Naive thymus-derived CD4-positive, alpha-beta T cell (primary cell): ENCODE measurements at regions of chr2 and their contacts with region 1.

Region 1: GRCh38 chr2:205766779-205767359 is 84.6 kb downstream of the NRP2 start:
- DNase-seq: peak in 8 of 9 donors; percentile 7 to 49 (median 40)
- ATAC-seq: peak; percentile 49
- H3K4me3 ChIP-seq: no peak overlapping the region
- H3K4me3 Mint-ChIP-seq: peak overlapping the region in 1 of 10 donors; percentile 25
- H3K27ac ChIP-seq: no peak overlapping the region
- H3K27ac Mint-ChIP-seq: no peak overlapping the region
- H3K4me1 ChIP-seq: no peaks in the 10 kb centered on the region
- H3K4me1 Mint-ChIP-seq: peaks cover 0 to 12% (median 8%) of the 10 kb centered on the region in 7 donors
- H3K27me3 ChIP-seq: no peaks in the 10 kb centered on the region
- H3K27me3 Mint-ChIP-seq: peaks cover 27 to 54% (median 35%) of the 10 kb centered on the region in 5 donors

Region 2: GRCh38 chr2:205175831-205176230 is 591.0 kb before region 1 on chr2:
- CTCF ChIA-PET with region 1: no interaction called
- POLR2A ChIA-PET with region 1: no interaction called
- intact Hi-C with region 1: no loop called
- DNase-seq: no peak
- ATAC-seq: no peak
- H3K4me3 ChIP-seq: no peak overlapping the region
- H3K4me3 Mint-ChIP-seq: no peak overlapping the region
- H3K27ac ChIP-seq: no peak overlapping the region
- H3K27ac Mint-ChIP-seq: no peak overlapping the region
- H3K4me1 ChIP-seq: no peaks in the 10 kb centered on the region
- H3K4me1 Mint-ChIP-seq: peaks cover 0 to 1% (median 0%) of the 10 kb centered on the region in 7 donors
- H3K27me3 ChIP-seq: no peaks in the 10 kb centered on the region
- H3K27me3 Mint-ChIP-seq: peaks cover 0 to 10% (median 0%) of the 10 kb centered on the region in 5 donors

Region 3: DNA sequence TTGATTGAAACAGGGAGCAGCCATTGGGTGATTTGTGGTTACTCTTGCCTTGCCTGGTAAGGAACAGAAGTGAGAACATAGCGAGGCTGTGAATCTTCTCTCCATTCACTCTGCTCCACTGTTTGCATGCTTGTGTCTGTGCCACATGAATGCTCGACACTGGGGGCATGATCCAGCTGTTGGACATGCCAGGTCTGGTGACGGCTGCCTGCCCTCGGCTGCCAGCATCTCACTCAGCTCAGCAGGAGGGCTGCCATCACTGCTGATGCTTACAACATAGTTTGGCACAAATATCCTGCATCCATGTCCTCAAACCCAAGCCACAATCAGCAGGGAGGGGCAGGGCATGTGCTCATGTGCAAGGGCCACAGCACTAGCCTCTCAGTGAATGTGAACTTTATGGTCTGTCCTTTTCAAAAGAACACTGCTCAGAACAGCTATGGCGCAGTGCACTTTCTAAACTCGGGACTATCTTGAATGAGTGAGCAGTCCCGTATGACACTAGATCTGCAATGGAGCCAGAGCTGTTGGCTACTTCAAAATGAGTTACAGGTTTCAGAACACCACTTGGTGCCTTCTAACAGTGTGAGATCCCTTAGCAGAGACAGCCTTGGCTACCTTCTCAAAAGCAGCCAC is 41.7 kb after region 1 on chr2:
- CTCF ChIA-PET with region 1: no interaction called
- POLR2A ChIA-PET with region 1: no interaction called
- intact Hi-C with region 1: loop called in 1 of 2 experiments (anchors 1 kb)
- DNase-seq: no peak
- ATAC-seq: no peak
- H3K4me3 ChIP-seq: no peak overlapping the region
- H3K4me3 Mint-ChIP-seq: no peak overlapping the region
- H3K27ac ChIP-seq: no peak overlapping the region
- H3K27ac Mint-ChIP-seq: no peak overlapping the region
- H3K4me1 ChIP-seq: no peaks in the 10 kb centered on the region
- H3K4me1 Mint-ChIP-seq: peaks cover 0 to 1% (median 0%) of the 10 kb centered on the region in 7 donors
- H3K27me3 ChIP-seq: no peaks in the 10 kb centered on the region
- H3K27me3 Mint-ChIP-seq: peaks cover 0 to 8% (median 4%) of the 10 kb centered on the region in 5 donors

Region 4: DNA sequence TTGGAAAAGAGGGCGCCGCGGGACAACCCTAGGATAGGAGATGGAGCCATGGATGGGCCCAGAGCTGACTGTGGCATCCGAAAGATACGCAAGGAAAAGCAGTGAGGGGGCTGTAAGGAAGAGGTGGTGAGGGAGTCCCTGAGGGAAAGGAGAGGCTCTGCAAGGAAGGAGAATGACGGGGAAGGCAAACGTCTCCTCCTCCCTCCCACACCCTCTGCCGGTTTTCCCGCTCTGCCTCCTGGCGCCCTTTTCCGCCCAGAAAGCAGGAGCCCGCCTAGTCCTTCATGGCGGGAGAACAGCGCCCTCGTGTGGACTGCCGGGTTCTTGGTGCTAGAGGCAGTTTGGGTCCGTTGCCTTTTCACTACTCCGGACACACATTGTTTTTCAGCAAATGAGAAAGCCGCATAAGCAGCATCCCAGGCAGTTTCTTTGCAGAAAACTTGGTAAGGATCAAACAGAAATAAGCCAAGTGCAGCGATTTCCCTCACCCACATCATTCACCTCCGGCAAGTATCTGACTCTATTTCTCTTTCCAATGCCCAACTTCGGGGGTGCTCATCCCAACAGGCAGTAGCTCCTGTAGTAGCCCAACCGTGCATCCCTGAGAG is 118.7 kb after region 1 on chr2:
- CTCF ChIA-PET with region 1: no interaction called
- POLR2A ChIA-PET with region 1: no interaction called
- intact Hi-C with region 1: loop called in 1 of 2 experiments (anchors 1 kb)
- DNase-seq: peak in 8 of 9 donors; percentile 6 to 76 (median 30)
- ATAC-seq: no peak
- H3K4me3 ChIP-seq: no peak overlapping the region
- H3K4me3 Mint-ChIP-seq: no peak overlapping the region
- H3K27ac ChIP-seq: no peak overlapping the region
- H3K27ac Mint-ChIP-seq: no peak overlapping the region
- H3K4me1 ChIP-seq: no peaks in the 10 kb centered on the region
- H3K4me1 Mint-ChIP-seq: peaks cover 0 to 6% (median 0%) of the 10 kb centered on the region in 7 donors
- H3K27me3 ChIP-seq: no peaks in the 10 kb centered on the region
- H3K27me3 Mint-ChIP-seq: peaks cover 14 to 40% (median 24%) of the 10 kb centered on the region in 5 donors

Region 5: DNA sequence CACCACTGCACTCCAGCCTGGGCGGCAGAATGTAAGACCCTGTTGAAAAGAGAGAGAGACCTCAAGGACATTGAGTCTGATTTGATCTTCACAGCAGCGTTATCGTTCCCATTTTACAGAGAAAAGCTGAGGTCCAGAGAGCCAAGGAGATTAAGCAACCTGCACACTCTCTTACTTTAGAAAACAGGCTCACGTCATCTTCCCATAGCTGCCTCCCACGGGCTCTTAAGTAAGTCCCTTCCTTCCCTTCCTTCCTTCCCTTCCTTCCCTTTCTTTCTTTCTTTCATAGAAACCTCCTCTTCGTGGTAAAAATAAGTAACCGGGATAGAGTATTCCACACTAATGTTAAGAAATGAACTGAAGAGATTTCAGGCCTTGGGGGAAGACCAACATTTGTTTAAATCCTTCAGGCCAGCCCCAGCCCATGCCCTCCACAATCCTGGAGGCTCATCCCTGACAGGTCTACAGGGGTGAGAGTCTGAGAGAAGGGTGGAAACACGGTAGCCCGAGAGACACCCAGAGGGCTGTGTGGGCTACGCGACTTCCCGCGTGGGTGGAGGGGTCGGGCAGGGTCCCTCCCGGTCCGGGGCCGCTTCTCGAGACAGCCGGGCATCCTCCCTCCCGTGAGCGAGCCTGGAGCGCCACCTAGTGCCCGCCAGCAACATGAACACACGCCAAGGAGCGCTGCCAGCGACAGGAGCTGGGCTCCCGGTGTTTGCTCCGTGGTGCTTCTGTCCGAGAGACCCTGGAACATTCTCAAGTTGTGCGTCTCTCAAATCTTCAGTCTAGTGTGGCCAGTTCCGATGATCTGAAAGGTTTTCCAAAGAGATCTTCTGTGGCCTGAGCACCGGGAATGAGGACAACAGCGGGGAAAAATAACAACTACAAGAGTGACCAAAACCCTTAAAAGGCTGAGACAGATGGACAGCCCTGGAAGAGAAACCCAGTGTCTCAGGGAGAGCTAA is 158.8 kb after region 1 on chr2:
- CTCF ChIA-PET with region 1: interaction called, 4 read pairs
- POLR2A ChIA-PET with region 1: no interaction called
- intact Hi-C with region 1: loop called (anchors 2 kb)
- DNase-seq: peak; percentile 23 to 79 (median 61)
- ATAC-seq: peak; percentile 81
- H3K4me3 ChIP-seq: no peak overlapping the region
- H3K4me3 Mint-ChIP-seq: peak overlapping the region in 6 of 10 donors; percentile 9 to 62 (median 60)
- H3K27ac ChIP-seq: no peak overlapping the region
- H3K27ac Mint-ChIP-seq: peak overlapping the region in 1 of 9 donors; percentile 21
- H3K4me1 ChIP-seq: peaks cover 0 to 5% of the 10 kb centered on the region in 2 donors
- H3K4me1 Mint-ChIP-seq: peaks cover 5 to 13% (median 9%) of the 10 kb centered on the region in 7 donors
- H3K27me3 ChIP-seq: peaks cover 0 to 4% of the 10 kb centered on the region in 2 donors
- H3K27me3 Mint-ChIP-seq: peaks cover 40 to 58% (median 50%) of the 10 kb centered on the region in 5 donors

Region 6: DNA sequence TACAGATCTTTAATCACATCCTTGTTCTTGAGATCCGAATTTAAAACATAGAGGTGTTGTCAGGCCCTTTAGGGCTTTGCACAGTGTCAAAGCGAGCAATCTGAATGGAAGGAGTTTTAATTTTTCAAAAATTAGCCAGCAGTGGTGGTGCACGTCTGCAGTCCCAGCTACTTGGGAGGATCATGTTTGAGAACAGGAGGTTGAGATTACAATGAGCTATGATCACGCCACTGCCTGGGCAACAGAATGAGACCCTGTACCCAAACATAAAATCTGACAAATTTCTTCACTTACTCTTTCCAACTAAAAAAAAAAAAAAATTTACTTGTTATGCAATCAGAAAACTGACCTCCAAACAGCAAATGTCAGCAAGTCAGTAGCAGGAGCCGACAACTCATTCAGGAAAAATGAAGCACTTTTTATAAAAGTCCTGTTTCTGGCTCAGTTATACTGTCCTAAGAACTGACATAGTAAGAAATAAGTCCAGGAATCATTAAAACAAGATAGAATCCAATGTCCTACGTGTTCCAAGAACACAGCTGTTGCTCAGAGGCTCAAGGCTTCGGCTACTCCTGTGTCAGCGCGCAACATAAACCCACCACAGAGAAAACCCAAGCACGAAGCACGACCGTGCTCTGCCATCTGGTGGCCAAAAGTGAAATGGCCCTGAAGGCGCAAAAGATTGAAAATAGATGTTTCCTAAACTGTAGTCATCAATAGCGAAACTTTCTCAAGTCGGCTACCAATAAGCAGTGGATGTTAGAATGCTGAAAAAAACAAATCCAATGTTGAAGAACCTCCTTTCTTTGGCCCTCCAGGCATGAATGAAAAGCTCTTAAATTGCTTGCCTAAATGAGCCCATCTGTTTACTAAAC is 181.0 kb after region 1 on chr2:
- CTCF ChIA-PET with region 1: no interaction called
- POLR2A ChIA-PET with region 1: no interaction called
- intact Hi-C with region 1: loop called in 1 of 2 experiments (anchors 1 kb)
- DNase-seq: peak in 8 of 9 donors; percentile 12 to 53 (median 28)
- ATAC-seq: peak; percentile 71
- H3K4me3 ChIP-seq: no peak overlapping the region
- H3K4me3 Mint-ChIP-seq: peak overlapping the region in 1 of 10 donors; percentile 13
- H3K27ac ChIP-seq: no peak overlapping the region
- H3K27ac Mint-ChIP-seq: no peak overlapping the region
- H3K4me1 ChIP-seq: no peaks in the 10 kb centered on the region
- H3K4me1 Mint-ChIP-seq: peaks cover 0 to 4% (median 3%) of the 10 kb centered on the region in 7 donors
- H3K27me3 ChIP-seq: no peaks in the 10 kb centered on the region
- H3K27me3 Mint-ChIP-seq: peaks cover 0 to 25% (median 9%) of the 10 kb centered on the region in 5 donors